K562 (cell line): ENCODE measurements at regions of chr15 and their contacts with region 1.

Region 1: GRCh38 chr15:60426870-60427508 is 29.2 kb upstream of the ANXA2 start:
- DNase-seq: no peak
- ATAC-seq: no peak
- H3K4me3 ChIP-seq: no peak overlapping the region
- H3K27ac ChIP-seq: no peak overlapping the region
- H3K4me1 ChIP-seq: peaks cover 7 to 19% of the 10 kb centered on the region in 2 experiments; a peak in 4 of 5 replicates
- H3K27me3 ChIP-seq: no peaks in the 10 kb centered on the region
- CTCF ChIP-seq: no peak
- EP300 ChIP-seq: no peak
- POLR2A ChIP-seq: no peak
- RAD21 ChIP-seq: no peak

Region 2: DNA sequence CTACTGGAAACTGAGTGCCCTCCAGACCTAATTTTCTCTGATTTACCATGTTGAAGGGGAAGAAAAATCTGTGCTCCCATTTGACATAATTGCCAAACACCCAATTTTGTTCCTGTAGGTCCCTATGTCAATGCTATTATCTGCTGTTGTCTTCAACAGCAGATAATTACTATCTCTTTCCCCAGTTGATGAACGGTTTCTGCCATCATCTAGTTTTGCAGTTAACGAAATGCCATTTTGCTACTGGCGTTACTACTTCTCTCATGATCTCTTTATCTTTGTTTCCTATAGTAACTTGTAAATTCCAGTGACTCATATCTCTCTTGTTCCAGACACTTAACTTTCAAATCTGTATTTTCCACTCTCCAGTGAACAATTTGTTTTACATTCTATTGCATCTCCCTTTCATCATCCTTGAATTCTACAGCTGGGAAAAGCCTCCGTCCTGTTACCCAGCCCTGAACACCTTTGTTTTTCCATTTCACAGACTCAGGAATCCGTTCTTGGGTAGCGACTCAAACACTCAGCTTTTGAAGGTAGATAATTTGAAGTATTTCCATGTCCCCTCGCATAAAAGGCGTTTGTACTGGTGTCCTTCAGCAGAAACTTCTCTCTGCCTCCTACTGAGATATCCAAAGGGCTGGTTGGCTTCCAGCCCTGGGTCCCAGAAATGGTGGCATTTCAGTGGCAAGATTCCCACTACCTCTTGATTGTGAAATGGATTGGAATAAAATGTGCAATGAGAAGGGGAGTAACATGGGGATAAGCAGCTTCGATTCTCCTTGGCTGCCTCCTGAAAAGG is 311.2 kb before region 1 on chr15:
- CTCF ChIA-PET with region 1: no interaction called
- POLR2A ChIA-PET with region 1: no interaction called
- in situ Hi-C with region 1: no loop called
- intact Hi-C with region 1: no loop called
- DNase-seq: no peak
- ATAC-seq: no peak
- H3K4me3 ChIP-seq: no peak overlapping the region
- H3K27ac ChIP-seq: no peak overlapping the region
- H3K4me1 ChIP-seq: no peaks in the 10 kb centered on the region
- H3K27me3 ChIP-seq: no peaks in the 10 kb centered on the region; a peak in 1 of 5 replicates
- CTCF ChIP-seq: no peak
- EP300 ChIP-seq: no peak
- POLR2A ChIP-seq: no peak
- RAD21 ChIP-seq: no peak

Region 3: GRCh38 chr15:60444289-60444912 is 17.4 kb after region 1 on chr15:
- CTCF ChIA-PET with region 1: no interaction called
- POLR2A ChIA-PET with region 1: interaction called, 11 read pairs
- in situ Hi-C with region 1: no loop called
- intact Hi-C with region 1: no loop called
- DNase-seq: no peak
- ATAC-seq: no peak
- H3K4me3 ChIP-seq: no peak overlapping the region
- H3K27ac ChIP-seq: no peak overlapping the region
- H3K4me1 ChIP-seq: no peaks in the 10 kb centered on the region
- H3K27me3 ChIP-seq: no peaks in the 10 kb centered on the region
- CTCF ChIP-seq: peak in 1 of 3 experiments; percentile 62; a peak in 3 of 6 replicates
- EP300 ChIP-seq: no peak
- POLR2A ChIP-seq: no peak
- RAD21 ChIP-seq: peak; percentile 44 to 46

Region 4: GRCh38 chr15:60635507-60636352 is 208.7 kb after region 1 on chr15:
- CTCF ChIA-PET with region 1: no interaction called
- POLR2A ChIA-PET with region 1: no interaction called
- in situ Hi-C with region 1: no loop called
- intact Hi-C with region 1: no loop called
- DNase-seq: no peak
- ATAC-seq: no peak
- H3K4me3 ChIP-seq: no peak overlapping the region
- H3K27ac ChIP-seq: no peak overlapping the region
- H3K4me1 ChIP-seq: no peaks in the 10 kb centered on the region
- H3K27me3 ChIP-seq: peaks cover 10% of the 10 kb centered on the region in 2 experiments; a peak in 4 of 5 replicates
- CTCF ChIP-seq: no peak
- EP300 ChIP-seq: no peak
- POLR2A ChIP-seq: no peak
- RAD21 ChIP-seq: no peak